Heart left ventricle (tissue), 16 donors: ENCODE measurements at regions of chr22 and their contacts with region 1.

Region 1: GRCh38 chr22:38705235-38706100 is at the start of gene GTPBP1:
- DNase-seq: peak; percentile 98 to 100 (median 99)
- ATAC-seq: peak; percentile 88 to 96 (median 94)
- H3K4me3 ChIP-seq: peak within 1 kb of the TSS; percentile 71 to 99 (median 84)
- H3K27ac ChIP-seq: peak within 1 kb of the TSS; percentile 73 to 99 (median 94)
- H3K4me1 ChIP-seq: peaks cover 0 to 53% (median 37%) of the 10 kb centered on the region in 12 donors
- H3K27me3 ChIP-seq: no peaks in the 10 kb centered on the region
- CTCF ChIP-seq: peak in 4 of 12 donors; percentile 15 to 40 (median 30)
- POLR2A ChIP-seq: peak; percentile 94 to 97
- total RNA-seq, gene GTPBP1: 23.7 to 45.3 (median 28.1) TPM

Region 2: GRCh38 chr22:38338772-38339379 is 366.6 kb before region 1 on chr22:
- intact Hi-C with region 1: no loop called
- DNase-seq: peak in 1 of 5 donors; percentile 4
- ATAC-seq: no peak
- H3K4me3 ChIP-seq: no peak overlapping the region
- H3K27ac ChIP-seq: no peak overlapping the region
- H3K4me1 ChIP-seq: peaks cover 0 to 13% (median 6%) of the 10 kb centered on the region in 12 donors
- H3K27me3 ChIP-seq: peaks cover 0 to 12% (median 0%) of the 10 kb centered on the region in 9 donors
- CTCF ChIP-seq: no peak
- POLR2A ChIP-seq: no peak

Region 3: DNA sequence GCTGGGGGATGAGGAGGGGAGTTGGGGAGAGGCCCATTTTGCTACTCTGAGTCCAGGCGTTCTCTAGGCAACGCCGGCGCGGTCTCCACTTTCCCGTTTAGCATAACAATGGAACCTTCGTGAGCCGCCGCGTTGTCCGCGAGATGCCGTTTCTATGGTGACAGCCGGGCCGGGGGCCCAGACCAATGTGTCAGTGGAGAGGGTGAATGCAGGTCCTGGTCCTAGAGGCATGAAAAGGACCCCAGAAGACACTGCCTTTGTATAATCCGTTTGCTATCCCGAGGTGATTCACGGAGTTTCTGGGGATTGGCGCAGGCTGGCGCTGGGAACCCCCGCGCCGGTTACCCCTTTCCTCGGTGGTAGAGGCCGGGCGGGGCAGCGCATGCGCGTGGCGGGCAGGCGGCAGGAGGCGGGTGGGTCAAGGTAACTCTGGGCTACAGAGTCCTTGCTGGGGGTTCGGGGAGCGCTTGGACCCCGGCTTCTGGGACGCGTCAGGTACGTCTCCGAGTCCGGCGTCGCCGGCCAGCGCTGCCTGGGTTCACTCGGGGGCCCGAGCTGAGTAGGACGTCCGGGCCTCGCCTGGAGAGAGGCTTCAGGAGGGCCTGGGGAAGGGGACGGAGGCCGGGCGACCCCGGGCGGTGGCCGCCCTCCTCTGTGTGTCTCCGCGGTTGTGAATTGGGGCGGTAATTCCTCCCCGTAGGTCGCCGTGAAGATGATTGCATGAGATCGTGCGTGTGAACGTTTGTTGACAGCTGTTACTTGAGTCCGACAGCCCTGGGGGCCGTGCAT is 49.0 kb before region 1 on chr22 and contains the starts of genes CBY1 and FAM227A:
- intact Hi-C with region 1: no loop called
- DNase-seq: peak; percentile 87 to 94 (median 90)
- ATAC-seq: peak; percentile 86 to 97 (median 96)
- H3K4me3 ChIP-seq: peak within 1 kb of the TSS; percentile 68 to 95 (median 91)
- H3K27ac ChIP-seq: peak within 1 kb of the TSS; percentile 89 to 99 (median 94)
- H3K4me1 ChIP-seq: peaks cover 0 to 24% (median 15%) of the 10 kb centered on the region in 12 donors
- H3K27me3 ChIP-seq: no peaks in the 10 kb centered on the region
- CTCF ChIP-seq: no peak
- POLR2A ChIP-seq: peak in 1 of 2 donors; percentile 68
- total RNA-seq, gene CBY1: 24.1 to 47.1 (median 37.9) TPM
- total RNA-seq, gene FAM227A: 0.16 to 1.0 (median 0.36) TPM

Region 4: GRCh38 chr22:38681784-38682335 is 23.6 kb before region 1 on chr22 and contains the start of gene TOMM22:
- intact Hi-C with region 1: loop called in 1 of 10 experiments (anchors 2 kb)
- DNase-seq: peak; percentile 88 to 94 (median 92)
- ATAC-seq: peak; percentile 96 to 99 (median 99)
- H3K4me3 ChIP-seq: peak within 1 kb of the TSS; percentile 72 to 100 (median 92)
- H3K27ac ChIP-seq: peak within 1 kb of the TSS in 11 of 12 donors; percentile 53 to 88 (median 79)
- H3K4me1 ChIP-seq: peaks cover 0 to 17% (median 8%) of the 10 kb centered on the region in 12 donors
- H3K27me3 ChIP-seq: no peaks in the 10 kb centered on the region
- CTCF ChIP-seq: peak; percentile 24 to 91 (median 64)
- POLR2A ChIP-seq: peak in 1 of 2 donors; percentile 47
- total RNA-seq, gene TOMM22: 37.1 to 82.1 (median 71.6) TPM

Region 5: DNA sequence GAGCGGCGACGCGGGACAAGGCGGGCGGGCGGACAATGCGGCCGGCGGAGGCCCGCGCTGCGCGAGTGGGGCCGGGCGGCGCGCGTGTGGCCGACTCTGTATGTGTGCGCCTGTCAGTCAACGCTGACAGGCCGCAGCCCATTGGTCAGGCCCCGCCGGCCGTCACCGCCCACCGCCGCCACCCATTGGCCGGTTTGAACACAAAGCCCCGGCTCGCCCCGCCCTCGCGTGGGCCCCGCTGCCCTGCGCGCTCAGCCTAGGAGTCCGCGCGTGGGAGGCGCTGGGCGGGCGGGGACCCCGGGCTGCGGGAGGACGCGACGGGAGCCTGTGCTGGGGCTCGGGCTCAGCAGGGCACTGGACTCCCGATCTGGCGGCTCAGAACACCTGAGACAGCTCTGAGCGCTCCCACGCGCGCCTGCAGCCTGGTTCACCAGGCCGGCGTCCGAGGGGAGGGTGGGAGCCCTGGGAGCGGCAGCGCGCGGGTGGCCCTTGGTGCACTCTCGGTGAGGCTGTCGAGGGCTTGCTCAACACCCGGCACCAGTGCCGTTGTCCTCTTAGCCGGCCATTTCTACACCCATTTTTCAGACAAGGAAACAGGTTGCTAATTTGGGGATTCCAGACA is 50.6 kb after region 1 on chr22 and contains the start of gene SUN2:
- intact Hi-C with region 1: loop called in 2 of 10 experiments (anchors 5 kb)
- DNase-seq: peak; percentile 95 to 98 (median 96)
- ATAC-seq: peak; percentile 76 to 88 (median 87)
- H3K4me3 ChIP-seq: peak within 1 kb of the TSS; percentile 34 to 92 (median 72)
- H3K27ac ChIP-seq: peak within 1 kb of the TSS; percentile 92 to 99 (median 97)
- H3K4me1 ChIP-seq: peaks cover 0 to 55% (median 27%) of the 10 kb centered on the region in 12 donors
- H3K27me3 ChIP-seq: no peaks in the 10 kb centered on the region
- CTCF ChIP-seq: peak in 1 of 12 donors; percentile 9
- POLR2A ChIP-seq: peak in 1 of 2 donors; percentile 78
- total RNA-seq, gene SUN2: 75.2 to 405 (median 125) TPM

Region 6: GRCh38 chr22:38782402-38783094 is 77.1 kb after region 1 on chr22:
- intact Hi-C with region 1: no loop called
- DNase-seq: peak in 2 of 5 donors; percentile 49 to 54
- ATAC-seq: peak in 1 of 4 donors; percentile 38
- H3K4me3 ChIP-seq: no peak overlapping the region
- H3K27ac ChIP-seq: peak overlapping the region in 10 of 12 donors; percentile 20 to 92 (median 54)
- H3K4me1 ChIP-seq: peaks cover 0 to 66% (median 33%) of the 10 kb centered on the region in 12 donors
- H3K27me3 ChIP-seq: no peaks in the 10 kb centered on the region
- CTCF ChIP-seq: no peak
- POLR2A ChIP-seq: no peak